A673 (cell line): ENCODE measurements at regions of chr12 and their contacts with region 1.

Region 1: DNA sequence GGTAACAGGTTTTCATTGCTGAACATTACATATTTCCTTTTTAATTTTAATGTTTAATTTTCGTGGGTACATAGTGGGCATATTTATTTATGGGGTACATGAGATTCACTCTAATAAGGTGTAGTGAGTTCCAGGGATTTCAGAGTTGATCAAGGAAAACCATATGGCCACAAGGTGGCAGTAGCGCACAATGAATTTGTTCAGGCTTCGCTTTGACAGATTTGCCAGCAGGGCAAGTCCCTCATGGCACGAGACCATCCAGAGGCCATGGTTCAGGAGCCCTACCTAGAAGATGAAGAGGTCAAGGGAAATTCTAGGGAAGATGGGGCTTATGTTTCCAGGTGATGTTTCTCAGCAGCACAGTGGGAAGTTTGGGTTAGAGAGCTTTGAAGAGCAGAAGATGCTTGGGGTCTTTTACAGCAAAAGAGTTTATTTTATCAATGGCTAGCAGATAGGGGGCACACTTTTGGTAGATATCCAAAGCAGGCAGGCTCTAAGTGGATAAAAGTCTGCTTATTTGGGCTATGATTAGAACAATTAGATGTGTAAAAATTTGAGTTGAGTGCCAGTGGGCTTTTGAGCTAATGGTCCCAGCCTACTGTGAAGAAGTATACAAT is 1004.4 kb downstream of the AACS start:
- DNase-seq: peak; percentile 86
- H3K4me3 ChIP-seq: no peak overlapping the region
- H3K27ac ChIP-seq: no peak overlapping the region
- H3K4me1 ChIP-seq: no peaks in the 10 kb centered on the region
- H3K27me3 ChIP-seq: no peaks in the 10 kb centered on the region
- CTCF ChIP-seq: peak; percentile 85

Region 2: GRCh38 chr12:125533434-125534029 is 536.1 kb before region 1 on chr12:
- CTCF ChIA-PET with region 1: no interaction called
- POLR2A ChIA-PET with region 1: no interaction called
- intact Hi-C with region 1: loop called (anchors 5 kb)
- DNase-seq: peak; percentile 68
- H3K4me3 ChIP-seq: no peak overlapping the region
- H3K27ac ChIP-seq: no peak overlapping the region
- H3K4me1 ChIP-seq: no peaks in the 10 kb centered on the region
- H3K27me3 ChIP-seq: peaks cover 3% of the 10 kb centered on the region
- CTCF ChIP-seq: peak; percentile 84

Region 3: DNA sequence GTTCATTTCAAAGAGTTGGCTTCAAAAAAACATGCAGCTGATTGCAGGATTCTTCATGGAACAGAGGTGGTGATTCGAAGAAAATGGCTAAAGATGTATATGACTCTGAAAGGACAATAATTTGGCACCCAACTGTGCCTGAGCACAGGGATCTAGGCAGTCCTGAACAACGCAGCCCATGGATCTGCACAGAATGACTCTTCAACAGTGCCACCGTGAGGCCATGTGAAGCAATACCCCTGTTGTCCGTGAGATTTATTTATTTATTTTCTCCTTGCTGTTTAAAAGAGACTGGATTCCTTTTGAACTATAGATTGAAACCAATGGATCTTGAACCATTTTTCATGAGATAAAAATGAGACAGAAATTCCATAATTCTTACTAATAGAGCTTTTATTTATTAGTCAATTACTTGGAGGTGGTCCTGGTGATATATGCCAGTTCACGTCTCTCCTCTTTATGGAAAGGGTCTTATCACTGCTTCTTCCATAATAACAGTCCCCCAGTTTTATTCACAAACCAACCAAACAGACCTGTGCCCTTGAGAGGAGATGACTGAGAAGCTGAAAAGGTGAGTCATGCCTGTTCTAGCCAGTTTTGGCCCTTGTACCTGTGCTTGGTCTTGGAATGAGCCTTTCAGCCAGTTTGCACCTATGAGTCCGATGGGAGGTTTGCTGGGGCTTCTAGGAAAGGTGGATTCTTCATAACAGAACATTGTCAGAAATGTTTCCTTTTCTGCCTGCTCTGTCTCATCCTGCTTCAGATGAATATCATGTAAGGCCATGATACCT is 593.8 kb after region 1 on chr12:
- CTCF ChIA-PET with region 1: no interaction called
- POLR2A ChIA-PET with region 1: no interaction called
- intact Hi-C with region 1: loop called (anchors 2 kb)
- DNase-seq: peak; percentile 72
- H3K4me3 ChIP-seq: no peak overlapping the region
- H3K27ac ChIP-seq: no peak overlapping the region
- H3K4me1 ChIP-seq: no peaks in the 10 kb centered on the region
- H3K27me3 ChIP-seq: no peaks in the 10 kb centered on the region
- CTCF ChIP-seq: peak; percentile 72

Region 4: DNA sequence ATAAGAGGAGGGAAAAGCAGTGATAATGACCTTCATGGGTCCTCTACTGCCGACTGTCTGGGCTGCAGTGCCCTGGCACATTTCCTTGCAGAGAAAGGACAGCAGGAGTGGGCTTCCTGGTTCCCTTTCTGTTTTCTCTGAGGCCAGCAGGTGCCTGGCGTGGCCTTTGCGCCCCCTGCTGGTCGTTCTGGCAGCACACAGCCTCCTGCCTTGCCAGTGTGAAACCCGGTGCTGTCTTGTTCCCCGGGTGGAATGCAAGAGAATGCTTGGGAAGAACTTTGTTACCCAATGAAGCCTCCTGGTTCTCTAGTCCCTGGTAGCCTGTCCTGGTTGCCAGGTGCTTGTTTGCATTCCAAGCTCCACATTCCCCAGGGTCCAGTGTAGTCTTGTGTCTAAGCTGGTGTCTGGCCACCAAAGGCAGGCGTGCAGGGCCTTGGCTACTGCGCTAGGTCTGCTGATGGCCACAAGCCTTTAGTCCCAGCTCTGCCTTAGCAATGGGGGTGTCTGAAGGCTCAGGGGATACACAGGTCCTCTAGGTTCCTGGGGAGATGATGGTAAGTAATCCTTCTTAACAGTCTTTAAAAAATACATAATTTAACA is 804.9 kb after region 1 on chr12:
- CTCF ChIA-PET with region 1: no interaction called
- POLR2A ChIA-PET with region 1: no interaction called
- intact Hi-C with region 1: loop called (anchors 5 kb)
- DNase-seq: peak; percentile 87
- H3K4me3 ChIP-seq: no peak overlapping the region
- H3K27ac ChIP-seq: no peak overlapping the region
- H3K4me1 ChIP-seq: peaks cover 6% of the 10 kb centered on the region
- H3K27me3 ChIP-seq: no peaks in the 10 kb centered on the region
- CTCF ChIP-seq: peak; percentile 99

Region 5: DNA sequence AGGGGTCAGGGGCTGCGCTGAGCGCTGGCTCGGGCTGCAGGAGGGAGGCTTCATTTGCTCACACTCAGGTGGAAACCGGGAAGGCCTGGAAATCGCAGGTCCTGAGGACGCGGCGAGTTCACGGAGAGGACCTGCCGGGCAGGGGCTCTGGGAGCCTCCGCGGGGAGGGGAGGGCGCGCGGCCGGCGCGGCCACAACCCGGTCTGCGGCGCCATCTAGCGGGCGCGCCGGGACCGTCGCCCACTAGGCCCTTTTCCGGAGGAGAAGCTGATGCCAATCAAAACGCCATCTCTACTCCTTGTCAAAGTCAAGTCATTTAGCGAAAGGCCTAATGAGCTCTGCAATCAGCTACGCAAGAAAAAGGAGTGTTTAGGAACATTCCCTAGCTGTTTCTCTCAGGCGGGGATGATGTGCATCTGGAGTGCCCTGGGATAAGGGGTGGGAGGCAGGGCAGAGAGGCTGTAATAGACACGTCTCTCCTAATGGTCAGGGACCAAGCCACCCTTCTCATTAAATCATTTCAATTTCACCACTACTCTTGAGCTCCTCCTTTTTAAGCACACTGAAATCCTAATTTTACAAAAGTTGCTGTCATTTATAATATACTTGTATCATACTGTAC is 1311.5 kb after region 1 on chr12:
- CTCF ChIA-PET with region 1: no interaction called
- POLR2A ChIA-PET with region 1: no interaction called
- intact Hi-C with region 1: loop called (anchors 2 kb)
- DNase-seq: peak; percentile 81
- H3K4me3 ChIP-seq: peak overlapping the region; percentile 42
- H3K27ac ChIP-seq: peak overlapping the region; percentile 26
- H3K4me1 ChIP-seq: peaks cover 3% of the 10 kb centered on the region
- H3K27me3 ChIP-seq: no peaks in the 10 kb centered on the region
- CTCF ChIP-seq: peak; percentile 90